Activated CD4-positive, alpha-beta T cell treated with anti-CD3 and anti-CD28 coated beads for 36 hours (primary cell): ENCODE measurements at regions of chr1 and their contacts with region 1.

Region 1: DNA sequence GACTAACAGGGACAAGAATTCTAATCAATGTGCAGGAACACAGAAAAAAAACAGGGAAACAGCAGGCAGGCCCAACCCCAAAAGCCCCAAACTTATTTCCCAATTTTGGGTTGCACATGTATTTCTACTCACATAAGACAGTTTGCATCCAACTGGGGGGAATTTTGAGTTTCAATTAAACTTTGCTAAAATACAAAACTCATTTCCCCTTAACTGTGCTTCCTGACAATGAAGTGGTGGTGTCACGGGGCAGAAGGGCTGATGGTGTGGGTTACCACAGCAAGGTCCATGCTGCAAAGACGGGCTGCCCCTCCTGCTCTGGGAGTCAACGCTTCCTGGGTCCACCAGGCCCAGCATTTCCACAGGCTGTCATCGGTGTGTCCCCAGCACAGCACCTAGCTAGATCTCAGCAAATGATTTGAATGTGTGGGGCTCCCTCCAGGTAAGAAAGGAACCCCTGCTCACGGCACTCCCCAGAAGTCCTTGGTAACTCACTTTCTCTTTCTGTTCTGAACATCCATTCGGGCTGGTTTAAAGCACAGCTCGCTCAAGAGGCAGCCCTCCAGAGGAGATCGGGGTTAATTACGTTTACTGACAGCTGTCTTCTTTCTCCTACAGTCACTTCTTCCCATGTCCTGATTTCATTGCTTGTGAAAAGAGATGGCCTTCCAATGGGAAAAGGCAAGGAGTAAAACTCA is 27.4 kb downstream of the HIVEP3 start:
- DNase-seq: peak; percentile 72
- ATAC-seq: peak; percentile 96
- H3K4me3 Mint-ChIP-seq: peak overlapping the region; percentile 78
- H3K27ac Mint-ChIP-seq: peak overlapping the region; percentile 95
- H3K4me1 Mint-ChIP-seq: peaks cover 50% of the 10 kb centered on the region
- H3K27me3 Mint-ChIP-seq: no peaks in the 10 kb centered on the region

Region 2: DNA sequence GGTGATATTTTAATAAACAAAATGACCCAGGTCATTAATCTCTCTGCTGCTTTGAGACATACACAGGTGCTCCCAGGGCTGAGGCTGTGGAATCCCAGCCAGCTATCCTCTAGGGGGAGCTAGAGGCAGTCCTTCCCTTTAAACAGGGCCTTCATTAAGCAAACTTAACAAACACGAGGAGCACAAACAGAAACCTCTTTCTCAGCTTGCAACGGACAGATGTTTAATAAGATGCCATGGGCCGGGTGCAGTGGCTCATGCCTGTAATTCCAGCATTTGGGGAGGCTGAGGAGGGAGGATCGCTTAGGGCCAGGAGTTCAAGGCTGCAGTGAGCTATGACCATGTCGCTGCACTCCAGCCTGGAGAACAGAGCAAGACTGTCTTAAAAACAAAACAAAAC is 79.3 kb before region 1 on chr1:
- CTCF ChIA-PET with region 1: interaction called, 4 read pairs
- POLR2A ChIA-PET with region 1: no interaction called
- intact Hi-C with region 1: loop called in 1 of 2 experiments (anchors 2 kb)
- DNase-seq: peak; percentile 78
- ATAC-seq: peak; percentile 68
- H3K4me3 Mint-ChIP-seq: no peak overlapping the region
- H3K27ac Mint-ChIP-seq: no peak overlapping the region
- H3K4me1 Mint-ChIP-seq: peaks cover 49% of the 10 kb centered on the region
- H3K27me3 Mint-ChIP-seq: no peaks in the 10 kb centered on the region

Region 3: DNA sequence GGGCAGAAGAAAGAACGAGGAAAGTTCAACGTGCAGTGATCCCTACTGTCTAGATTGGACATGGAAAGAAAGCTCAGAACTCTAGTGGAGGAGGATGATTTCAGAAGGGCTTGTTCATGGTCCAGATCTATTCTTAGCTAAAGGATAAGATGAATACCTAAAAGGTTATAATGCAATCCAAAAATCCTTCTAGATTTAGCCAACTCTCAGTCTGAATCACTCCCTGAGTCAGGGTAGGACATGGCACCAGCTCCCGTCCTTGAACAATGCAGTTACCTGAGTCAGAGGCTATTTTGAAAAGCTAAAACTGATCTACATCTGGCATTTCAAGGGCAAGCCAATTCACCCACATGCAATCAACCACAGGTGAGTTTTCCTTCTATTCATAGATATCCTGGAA is 66.2 kb after region 1 on chr1:
- CTCF ChIA-PET with region 1: no interaction called
- POLR2A ChIA-PET with region 1: no interaction called
- intact Hi-C with region 1: no loop called
- DNase-seq: no peak
- ATAC-seq: no peak
- H3K4me3 Mint-ChIP-seq: no peak overlapping the region
- H3K27ac Mint-ChIP-seq: no peak overlapping the region
- H3K4me1 Mint-ChIP-seq: peaks cover 12% of the 10 kb centered on the region
- H3K27me3 Mint-ChIP-seq: no peaks in the 10 kb centered on the region